Activated CD4-positive, alpha-beta memory T cell treated with anti-CD3 and anti-CD28 coated beads for 36 hours (primary cell): ENCODE measurements at regions of chr3 and their contacts with region 1.

Region 1: GRCh38 chr3:121660356-121661171 is at the start of gene HCLS1:
- DNase-seq: peak; percentile 83
- H3K4me3 Mint-ChIP-seq: peak within 1 kb of the TSS; percentile 97
- H3K27ac Mint-ChIP-seq: peak within 1 kb of the TSS; percentile 100
- H3K4me1 Mint-ChIP-seq: peaks cover 47% of the 10 kb centered on the region
- H3K27me3 Mint-ChIP-seq: no peaks in the 10 kb centered on the region
- total RNA-seq, gene HCLS1: 249 to 251 TPM

Region 2: GRCh38 chr3:121431726-121432517 is 228.6 kb before region 1 on chr3:
- CTCF ChIA-PET with region 1: no interaction called
- POLR2A ChIA-PET with region 1: no interaction called
- intact Hi-C with region 1: loop called (anchors 5 kb)
- DNase-seq: peak; percentile 53
- H3K4me3 Mint-ChIP-seq: peak overlapping the region; percentile 6
- H3K27ac Mint-ChIP-seq: peak overlapping the region; percentile 38
- H3K4me1 Mint-ChIP-seq: peaks cover 14% of the 10 kb centered on the region
- H3K27me3 Mint-ChIP-seq: no peaks in the 10 kb centered on the region

Region 3: GRCh38 chr3:121482660-121483059 is 177.9 kb before region 1 on chr3:
- CTCF ChIA-PET with region 1: no interaction called
- POLR2A ChIA-PET with region 1: no interaction called
- intact Hi-C with region 1: no loop called
- DNase-seq: no peak
- H3K4me3 Mint-ChIP-seq: no peak overlapping the region
- H3K27ac Mint-ChIP-seq: no peak overlapping the region
- H3K4me1 Mint-ChIP-seq: no peaks in the 10 kb centered on the region
- H3K27me3 Mint-ChIP-seq: no peaks in the 10 kb centered on the region

Region 4: DNA sequence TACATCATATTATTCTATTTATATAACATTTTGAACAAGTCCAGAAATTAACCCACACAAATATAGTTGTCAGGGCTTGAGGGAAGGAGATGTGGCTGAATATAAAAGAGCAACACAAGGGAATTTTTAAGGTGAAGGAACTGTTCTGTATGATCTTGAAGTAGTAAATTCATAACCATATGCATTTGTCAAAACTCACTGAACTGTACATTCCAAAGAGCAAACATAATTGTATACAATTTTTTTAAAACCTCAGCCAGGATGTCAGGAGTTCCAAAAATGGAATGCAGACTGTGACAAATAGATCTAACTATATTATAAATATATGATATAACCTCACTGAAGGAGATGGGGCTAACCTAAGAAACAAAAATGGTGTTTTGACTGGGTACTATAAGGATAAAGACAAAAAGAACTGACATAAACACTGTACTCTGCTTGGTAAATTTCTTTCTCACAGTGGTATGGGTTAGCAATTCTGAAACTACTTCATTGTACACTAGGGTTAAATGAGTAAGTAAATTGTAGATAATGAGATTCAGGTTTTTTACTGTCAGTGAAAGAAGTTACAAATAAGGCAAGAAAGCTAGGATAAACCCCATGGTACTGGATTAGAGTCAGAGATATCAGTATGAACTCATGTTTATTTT is 74.6 kb after region 1 on chr3:
- CTCF ChIA-PET with region 1: no interaction called
- POLR2A ChIA-PET with region 1: no interaction called
- intact Hi-C with region 1: loop called (anchors 2 kb)
- DNase-seq: no peak
- H3K4me3 Mint-ChIP-seq: no peak overlapping the region
- H3K27ac Mint-ChIP-seq: peak overlapping the region; percentile 28
- H3K4me1 Mint-ChIP-seq: peaks cover 46% of the 10 kb centered on the region
- H3K27me3 Mint-ChIP-seq: no peaks in the 10 kb centered on the region

Region 5: DNA sequence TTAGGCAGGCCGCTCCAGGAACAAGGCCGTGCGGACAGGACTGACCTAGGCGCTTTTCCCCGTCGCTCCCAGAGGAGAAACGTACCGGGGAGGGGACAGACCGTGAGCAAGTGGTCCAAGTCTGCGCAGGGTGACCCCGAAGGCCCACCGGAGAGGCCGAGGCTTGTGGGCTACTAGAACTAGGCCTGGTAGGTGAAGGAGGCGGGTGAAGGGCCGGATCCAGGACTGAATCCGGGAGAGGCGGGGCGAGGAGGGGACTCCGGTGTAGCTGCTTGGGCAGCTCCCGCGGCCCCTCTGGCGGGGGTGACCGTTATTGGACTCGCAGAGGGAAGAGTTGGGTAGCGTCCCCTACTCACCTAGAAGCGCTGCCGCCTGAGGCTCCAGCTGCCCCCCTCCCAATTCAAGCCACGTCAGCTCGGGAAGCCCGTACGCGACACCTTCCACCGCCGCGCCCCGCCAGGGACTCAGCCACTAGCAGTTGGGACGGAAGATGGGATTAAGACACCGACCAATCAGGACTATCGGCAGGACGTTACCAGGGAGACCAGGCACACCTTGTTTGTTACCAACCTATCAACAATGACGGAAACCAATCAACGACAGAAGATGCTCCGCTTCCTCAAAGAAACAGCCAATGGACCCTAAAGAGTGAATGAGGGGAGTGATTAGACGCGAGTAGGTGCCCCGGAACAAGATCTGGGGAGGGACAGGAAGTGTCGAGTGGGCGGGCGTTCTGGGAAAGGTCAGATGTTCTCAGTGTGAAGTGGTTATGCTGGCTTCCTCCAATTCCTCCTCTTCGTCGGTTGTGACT is 88.9 kb after region 1 on chr3 and contains the start of gene GOLGB1:
- CTCF ChIA-PET with region 1: interaction called, 3 read pairs
- POLR2A ChIA-PET with region 1: interaction called, 4 read pairs
- intact Hi-C with region 1: loop called (anchors 1 kb)
- DNase-seq: peak; percentile 97
- H3K4me3 Mint-ChIP-seq: no peak within 1 kb of the TSS
- H3K27ac Mint-ChIP-seq: no peak within 1 kb of the TSS
- H3K4me1 Mint-ChIP-seq: peaks cover 10% of the 10 kb centered on the region
- H3K27me3 Mint-ChIP-seq: no peaks in the 10 kb centered on the region
- total RNA-seq, gene GOLGB1: 22.7 to 26.0 TPM

Region 6: DNA sequence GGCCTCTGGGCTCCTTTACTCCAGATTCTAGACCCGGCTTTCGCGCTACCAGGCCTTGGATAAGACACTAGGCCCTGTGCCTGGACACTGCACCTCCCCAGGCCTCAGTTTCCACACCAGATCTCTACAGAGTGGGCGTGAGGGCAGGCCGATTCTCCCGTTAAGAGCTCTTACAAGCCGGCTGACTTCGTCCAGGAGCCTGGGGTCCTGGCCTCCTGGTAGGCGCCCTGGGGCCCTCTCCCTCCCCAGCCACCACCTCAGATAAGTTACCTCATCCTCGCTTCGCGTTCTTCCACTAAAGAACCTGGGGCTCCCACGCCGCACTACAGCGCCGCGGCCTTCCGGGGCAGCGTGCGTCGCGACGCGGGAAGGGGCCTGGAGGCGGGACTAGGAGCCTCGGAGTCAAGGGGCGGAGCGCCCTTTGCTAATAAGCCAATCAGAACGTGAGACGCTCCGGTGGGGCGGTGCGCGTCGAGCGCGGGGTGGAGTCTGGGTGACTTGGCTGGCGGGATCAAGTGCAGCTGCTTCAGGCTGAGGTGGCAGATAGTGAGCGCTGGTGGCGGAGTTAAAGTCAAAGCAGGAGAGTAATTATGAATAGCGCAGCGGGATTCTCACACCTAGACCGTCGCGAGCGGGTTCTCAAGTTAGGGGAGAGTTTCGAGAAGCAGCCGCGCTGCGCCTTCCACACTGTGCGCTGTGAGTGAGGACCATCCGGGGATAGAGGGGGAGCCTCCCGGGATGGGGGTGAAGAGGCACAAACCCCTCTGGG is 174.3 kb after region 1 on chr3 and contains the starts of genes EAF2 and IQCB1:
- CTCF ChIA-PET with region 1: no interaction called
- POLR2A ChIA-PET with region 1: no interaction called
- intact Hi-C with region 1: loop called (anchors 1 kb)
- DNase-seq: peak; percentile 98
- H3K4me3 Mint-ChIP-seq: peak within 1 kb of the TSS; percentile 98
- H3K27ac Mint-ChIP-seq: peak within 1 kb of the TSS; percentile 84
- H3K4me1 Mint-ChIP-seq: peaks cover 37% of the 10 kb centered on the region
- H3K27me3 Mint-ChIP-seq: no peaks in the 10 kb centered on the region
- total RNA-seq, gene EAF2: 14.4 to 14.8 TPM
- total RNA-seq, gene IQCB1: 36.8 to 37.3 TPM

Region 7: GRCh38 chr3:122383771-122384697 is 723.5 kb after region 1 on chr3 and contains the start of gene FAM162A:
- CTCF ChIA-PET with region 1: no interaction called
- POLR2A ChIA-PET with region 1: interaction called, 3 read pairs
- intact Hi-C with region 1: loop called (anchors 1 kb)
- DNase-seq: peak; percentile 95
- H3K4me3 Mint-ChIP-seq: peak within 1 kb of the TSS; percentile 94
- H3K27ac Mint-ChIP-seq: peak within 1 kb of the TSS; percentile 92
- H3K4me1 Mint-ChIP-seq: peaks cover 60% of the 10 kb centered on the region
- H3K27me3 Mint-ChIP-seq: no peaks in the 10 kb centered on the region
- total RNA-seq, gene FAM162A: 99.1 to 102 TPM

Region 8: DNA sequence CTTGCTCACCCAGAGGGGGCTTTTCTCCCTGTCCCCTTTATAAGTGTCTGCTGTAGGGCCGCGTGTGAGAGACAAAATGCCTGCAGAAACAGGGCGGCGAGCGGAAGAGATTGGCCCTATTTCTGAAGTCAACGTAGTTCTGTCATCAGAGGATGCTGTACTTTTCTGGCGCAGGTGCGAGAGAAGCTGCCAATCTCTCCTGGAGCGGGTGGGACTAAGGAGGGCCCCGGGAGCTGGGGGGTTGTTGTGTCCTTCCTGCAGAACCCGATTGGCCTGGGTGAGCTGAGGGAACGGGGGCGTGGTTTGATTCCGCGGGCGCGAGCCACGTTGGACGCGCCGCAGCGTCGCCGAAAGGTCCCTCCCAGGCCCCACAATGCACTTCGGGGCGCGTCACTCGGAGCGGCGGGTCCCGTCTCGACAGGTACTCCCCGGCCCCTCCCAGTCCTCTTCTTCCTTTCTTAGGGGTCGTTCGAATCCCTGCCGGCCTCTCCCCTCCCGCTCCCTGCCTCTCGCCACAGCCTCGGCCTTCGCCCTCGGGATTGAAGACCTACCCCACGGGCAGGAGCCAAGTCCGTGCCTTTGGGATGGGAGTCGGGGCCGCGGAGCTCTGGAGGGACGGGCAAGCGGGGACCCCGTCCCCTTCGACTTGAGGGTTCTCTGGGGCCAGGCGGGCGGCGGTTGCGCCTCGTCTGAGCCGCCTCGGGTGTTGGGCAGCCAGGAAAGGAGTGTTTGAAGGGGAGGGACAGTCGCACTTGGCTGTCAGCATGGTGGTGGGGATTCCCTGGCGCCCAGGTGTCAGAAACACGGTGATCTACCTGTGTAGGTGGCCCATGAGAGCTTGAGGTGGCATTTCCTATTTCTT is 1541.2 kb after region 1 on chr3 and contains the start of gene SEC22A:
- CTCF ChIA-PET with region 1: no interaction called
- POLR2A ChIA-PET with region 1: no interaction called
- intact Hi-C with region 1: loop called (anchors 5 kb)
- DNase-seq: peak; percentile 97
- H3K4me3 Mint-ChIP-seq: peak within 1 kb of the TSS; percentile 87
- H3K27ac Mint-ChIP-seq: peak within 1 kb of the TSS; percentile 86
- H3K4me1 Mint-ChIP-seq: peaks cover 23% of the 10 kb centered on the region
- H3K27me3 Mint-ChIP-seq: no peaks in the 10 kb centered on the region
- total RNA-seq, gene SEC22A: 19.6 to 21.5 TPM